K562 (cell line): ENCODE measurements at regions of chr6 and their contacts with region 1.

Region 1: DNA sequence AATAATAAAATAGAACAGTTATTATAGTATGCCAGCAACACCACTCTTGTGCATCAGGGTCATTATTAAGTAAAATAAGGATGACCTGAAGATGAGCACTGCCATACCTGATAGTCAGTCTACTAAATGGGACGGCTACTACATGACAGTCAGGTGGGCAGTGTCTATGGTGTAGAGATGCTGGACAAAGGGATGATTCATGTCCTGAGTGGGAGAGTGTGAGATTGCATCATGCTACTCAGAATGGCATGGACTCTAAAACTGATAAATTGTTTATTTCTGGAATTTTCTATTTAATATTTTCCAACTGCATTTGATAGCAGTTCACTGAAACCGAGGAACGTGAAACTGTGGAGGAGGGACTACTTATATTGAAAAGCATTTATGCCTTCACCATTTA is 38.8 kb downstream of the SNX9 start:
- DNase-seq: peak in 2 of 4 experiments; percentile 44 to 69
- ATAC-seq: peak; percentile 75
- H3K4me3 ChIP-seq: no peak overlapping the region
- H3K27ac ChIP-seq: peak overlapping the region; percentile 44
- H3K4me1 ChIP-seq: peaks cover 18 to 64% of the 10 kb centered on the region in 2 experiments; a peak in 4 of 5 replicates
- H3K27me3 ChIP-seq: no peaks in the 10 kb centered on the region
- CTCF ChIP-seq: no peak
- EP300 ChIP-seq: peak; percentile 68
- POLR2A ChIP-seq: no peak
- RAD21 ChIP-seq: peak; percentile 3 to 16; a peak in 1 of 4 replicates

Region 2: GRCh38 chr6:157811476-157812173 is 50.2 kb before region 1 on chr6:
- CTCF ChIA-PET with region 1: no interaction called
- POLR2A ChIA-PET with region 1: no interaction called
- in situ Hi-C with region 1: no loop called
- intact Hi-C with region 1: no loop called
- DNase-seq: peak in 2 of 4 experiments; percentile 77 to 84
- ATAC-seq: peak; percentile 77
- H3K4me3 ChIP-seq: no peak overlapping the region
- H3K27ac ChIP-seq: peak overlapping the region; percentile 62
- H3K4me1 ChIP-seq: peaks cover 29 to 58% of the 10 kb centered on the region in 2 experiments
- H3K27me3 ChIP-seq: no peaks in the 10 kb centered on the region
- CTCF ChIP-seq: no peak
- EP300 ChIP-seq: peak; percentile 96
- POLR2A ChIP-seq: no peak
- RAD21 ChIP-seq: peak in 1 of 2 experiments; percentile 41; a peak in 1 of 4 replicates

Region 3: DNA sequence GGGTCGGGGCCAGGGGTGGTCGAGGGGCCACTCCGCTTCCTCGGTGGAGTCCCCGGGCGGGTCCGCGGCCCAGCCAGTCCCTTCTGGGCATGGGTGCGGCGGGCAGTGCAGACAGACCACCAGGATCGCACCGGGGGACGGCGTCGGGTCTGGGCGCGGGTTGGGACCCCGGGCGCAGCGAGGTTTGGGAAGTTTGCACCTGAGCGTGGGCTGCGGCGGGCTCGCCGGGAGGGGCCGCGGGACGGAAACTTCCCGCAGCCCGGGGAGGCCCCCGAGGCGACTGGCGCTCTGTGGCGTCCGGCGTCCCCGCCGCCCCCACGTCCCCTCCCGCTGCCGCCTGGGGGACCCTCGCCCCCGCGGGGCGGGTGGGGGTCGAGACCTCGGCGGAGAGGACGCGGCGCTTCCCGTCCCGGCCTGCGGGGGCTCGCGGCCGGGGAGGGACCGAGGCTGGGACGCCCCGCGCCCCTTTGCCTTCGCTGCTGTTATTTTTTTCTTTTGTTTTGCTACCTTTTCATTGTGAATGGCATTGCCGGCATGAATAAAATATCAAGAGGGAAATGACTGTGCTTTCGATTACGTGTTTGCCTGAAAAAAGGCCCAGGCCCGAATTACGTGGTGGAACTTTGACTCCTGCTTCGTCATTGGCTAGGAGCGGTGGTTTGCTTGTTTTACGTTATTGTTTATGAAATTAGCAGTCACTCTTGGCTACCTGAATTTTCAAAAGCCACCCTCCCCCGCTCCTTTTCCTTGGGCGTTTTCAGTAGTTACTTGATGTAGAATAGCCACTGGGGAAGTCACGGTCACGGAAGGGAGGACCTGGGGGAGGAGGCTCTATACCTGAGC is 38.1 kb before region 1 on chr6:
- CTCF ChIA-PET with region 1: no interaction called
- POLR2A ChIA-PET with region 1: no interaction called
- in situ Hi-C with region 1: no loop called
- intact Hi-C with region 1: loop called (anchors 2 kb)
- DNase-seq: peak; percentile 56 to 85 (median 72)
- ATAC-seq: peak; percentile 59
- H3K4me3 ChIP-seq: peak overlapping the region; percentile 68
- H3K27ac ChIP-seq: peak overlapping the region; percentile 91
- H3K4me1 ChIP-seq: peaks cover 16% of the 10 kb centered on the region in 2 experiments; a peak in 4 of 5 replicates
- H3K27me3 ChIP-seq: no peaks in the 10 kb centered on the region
- CTCF ChIP-seq: peak in 2 of 3 experiments; percentile 1 to 35; a peak in 2 of 6 replicates
- EP300 ChIP-seq: peak; percentile 67; the same call in 1 of the 2 replicates
- POLR2A ChIP-seq: peak; percentile 73
- RAD21 ChIP-seq: no peak; a peak in 1 of 4 replicates

Region 4: GRCh38 chr6:157841211-157841840 is 20.5 kb before region 1 on chr6:
- CTCF ChIA-PET with region 1: no interaction called
- POLR2A ChIA-PET with region 1: interaction called, 4 read pairs
- in situ Hi-C with region 1: no loop called
- intact Hi-C with region 1: loop called (anchors 2 kb)
- DNase-seq: peak; percentile 50 to 91 (median 66)
- ATAC-seq: peak; percentile 89
- H3K4me3 ChIP-seq: no peak overlapping the region
- H3K27ac ChIP-seq: peak overlapping the region; percentile 64
- H3K4me1 ChIP-seq: peaks cover 19 to 61% of the 10 kb centered on the region in 2 experiments
- H3K27me3 ChIP-seq: no peaks in the 10 kb centered on the region
- CTCF ChIP-seq: no peak
- EP300 ChIP-seq: peak; percentile 84
- POLR2A ChIP-seq: 0 out of 2 replicates have a peak, but pooled peaks have one; percentile 35
- RAD21 ChIP-seq: 0 out of 4 replicates have a peak, but pooled peaks of 1 of the 2 experiments have one; percentile 16

Region 5: DNA sequence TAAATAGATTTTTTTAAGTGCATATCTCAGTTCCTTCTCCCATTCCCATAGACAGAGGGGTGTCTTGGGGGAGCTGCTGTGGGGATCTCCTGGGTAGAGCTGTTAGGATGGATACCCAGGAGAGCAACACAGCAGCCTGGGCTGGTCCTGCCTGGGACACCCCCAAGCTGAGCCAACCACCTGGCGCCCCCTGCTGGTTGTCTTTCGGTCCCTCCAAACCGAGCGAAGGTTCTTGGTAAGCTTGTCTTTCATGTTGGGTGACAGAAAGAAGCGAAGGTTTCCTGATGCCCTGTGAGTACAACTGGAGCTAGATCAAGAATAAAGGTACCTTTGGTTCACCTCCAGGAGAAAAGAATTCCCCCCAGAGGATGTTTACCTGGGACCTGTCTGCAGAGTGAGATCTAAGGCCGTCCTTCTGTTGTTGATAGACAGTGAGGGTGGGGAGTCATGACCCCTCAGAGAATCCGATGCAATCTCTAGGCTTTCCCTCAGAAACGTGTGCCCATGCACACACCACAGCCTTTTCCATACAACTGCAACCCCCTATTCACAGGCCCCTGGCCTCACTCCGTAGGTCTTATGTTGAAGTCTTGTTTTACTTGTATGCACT is 12.0 kb after region 1 on chr6:
- CTCF ChIA-PET with region 1: no interaction called
- POLR2A ChIA-PET with region 1: interaction called, 10 read pairs
- in situ Hi-C with region 1: no loop called
- intact Hi-C with region 1: no loop called
- DNase-seq: peak; percentile 78 to 91 (median 82)
- ATAC-seq: peak; percentile 98
- H3K4me3 ChIP-seq: no peak overlapping the region
- H3K27ac ChIP-seq: no peak overlapping the region
- H3K4me1 ChIP-seq: no peaks in the 10 kb centered on the region
- H3K27me3 ChIP-seq: no peaks in the 10 kb centered on the region
- CTCF ChIP-seq: peak; percentile 91 to 97 (median 92)
- EP300 ChIP-seq: 0 out of 2 replicates have a peak, but pooled peaks have one; percentile 7
- POLR2A ChIP-seq: 0 out of 2 replicates have a peak, but pooled peaks have one; percentile 9
- RAD21 ChIP-seq: peak; percentile 95 to 97

Region 6: DNA sequence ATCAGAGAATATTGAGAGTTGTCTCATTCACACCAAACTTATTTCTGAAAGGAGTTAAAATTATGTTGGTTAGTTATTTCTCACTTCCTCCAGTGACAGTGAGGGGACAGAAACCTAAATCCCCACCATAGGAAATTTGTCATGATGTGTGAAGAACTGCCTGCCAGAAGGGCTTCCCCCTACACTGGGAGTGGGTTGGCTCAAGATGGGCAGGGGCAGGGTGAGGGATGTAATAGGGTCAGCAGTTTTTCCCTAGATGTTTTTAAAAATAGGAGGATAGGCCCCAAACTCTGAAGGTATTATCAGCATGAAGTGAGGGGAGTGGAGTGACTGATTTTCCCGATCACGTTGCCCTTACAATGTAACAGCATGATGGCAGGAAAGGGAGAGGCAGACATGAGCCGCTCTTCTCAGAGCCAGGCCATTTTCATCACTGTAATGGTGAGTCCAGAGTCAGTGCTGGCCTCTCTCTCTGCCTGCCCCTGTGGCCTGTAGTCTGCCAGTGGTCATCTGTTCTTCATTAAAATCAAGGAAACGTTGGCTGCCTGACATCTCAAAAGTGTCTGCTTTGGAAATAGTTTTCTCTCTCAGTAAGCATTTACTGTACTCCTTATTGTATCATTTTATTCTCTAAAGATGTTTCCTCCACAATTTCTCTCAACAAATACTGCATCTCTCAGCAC is 60.0 kb after region 1 on chr6:
- CTCF ChIA-PET with region 1: no interaction called
- POLR2A ChIA-PET with region 1: no interaction called
- in situ Hi-C with region 1: no loop called
- intact Hi-C with region 1: no loop called
- DNase-seq: no peak
- ATAC-seq: no peak
- H3K4me3 ChIP-seq: no peak overlapping the region
- H3K27ac ChIP-seq: no peak overlapping the region
- H3K4me1 ChIP-seq: no peaks in the 10 kb centered on the region
- H3K27me3 ChIP-seq: no peaks in the 10 kb centered on the region
- CTCF ChIP-seq: no peak
- EP300 ChIP-seq: no peak
- POLR2A ChIP-seq: no peak
- RAD21 ChIP-seq: no peak